Heart left ventricle (tissue), 16 donors: ENCODE measurements at regions of chr1 and their contacts with region 1.

Region 1: GRCh38 chr1:91529856-91530255 is 29.2 kb downstream of the CDC7 start:
- DNase-seq: no peak
- ATAC-seq: peak in 2 of 4 donors; percentile 61 to 67
- H3K4me3 ChIP-seq: no peak overlapping the region
- H3K27ac ChIP-seq: no peak overlapping the region
- H3K4me1 ChIP-seq: peaks cover 0 to 9% (median 0%) of the 10 kb centered on the region in 12 donors
- H3K27me3 ChIP-seq: no peaks in the 10 kb centered on the region
- CTCF ChIP-seq: peak in 7 of 12 donors; percentile 21 to 58 (median 32)
- POLR2A ChIP-seq: no peak

Region 2: DNA sequence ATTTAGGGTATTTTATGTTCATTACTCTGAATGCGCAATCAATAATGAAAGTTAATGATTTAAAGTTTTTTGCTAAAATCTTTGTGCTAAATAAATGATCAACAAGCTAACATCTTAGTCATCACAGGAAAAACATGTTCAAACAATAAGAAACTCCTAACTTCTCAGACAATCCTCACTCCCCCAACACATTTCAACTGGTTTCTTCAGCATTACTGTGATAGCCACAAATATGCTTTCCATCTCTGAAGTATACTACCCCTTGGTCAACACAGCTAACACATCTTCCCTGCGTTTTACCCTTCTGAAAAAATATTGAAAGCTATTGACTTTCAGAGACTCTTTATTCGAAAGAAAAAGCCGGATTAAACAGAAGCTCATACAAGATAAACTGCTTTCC is 593.8 kb before region 1 on chr1:
- intact Hi-C with region 1: no loop called
- DNase-seq: no peak
- ATAC-seq: no peak
- H3K4me3 ChIP-seq: no peak overlapping the region
- H3K27ac ChIP-seq: no peak overlapping the region
- H3K4me1 ChIP-seq: peaks cover 0 to 20% (median 1%) of the 10 kb centered on the region in 12 donors
- H3K27me3 ChIP-seq: no peaks in the 10 kb centered on the region
- CTCF ChIP-seq: no peak
- POLR2A ChIP-seq: no peak

Region 3: GRCh38 chr1:91490501-91490900 is 39.4 kb before region 1 on chr1:
- intact Hi-C with region 1: no loop called
- DNase-seq: no peak
- ATAC-seq: no peak
- H3K4me3 ChIP-seq: no peak overlapping the region
- H3K27ac ChIP-seq: no peak overlapping the region
- H3K4me1 ChIP-seq: no peaks in the 10 kb centered on the region
- H3K27me3 ChIP-seq: peaks cover 0 to 4% (median 0%) of the 10 kb centered on the region in 9 donors
- CTCF ChIP-seq: no peak
- POLR2A ChIP-seq: no peak

Region 4: DNA sequence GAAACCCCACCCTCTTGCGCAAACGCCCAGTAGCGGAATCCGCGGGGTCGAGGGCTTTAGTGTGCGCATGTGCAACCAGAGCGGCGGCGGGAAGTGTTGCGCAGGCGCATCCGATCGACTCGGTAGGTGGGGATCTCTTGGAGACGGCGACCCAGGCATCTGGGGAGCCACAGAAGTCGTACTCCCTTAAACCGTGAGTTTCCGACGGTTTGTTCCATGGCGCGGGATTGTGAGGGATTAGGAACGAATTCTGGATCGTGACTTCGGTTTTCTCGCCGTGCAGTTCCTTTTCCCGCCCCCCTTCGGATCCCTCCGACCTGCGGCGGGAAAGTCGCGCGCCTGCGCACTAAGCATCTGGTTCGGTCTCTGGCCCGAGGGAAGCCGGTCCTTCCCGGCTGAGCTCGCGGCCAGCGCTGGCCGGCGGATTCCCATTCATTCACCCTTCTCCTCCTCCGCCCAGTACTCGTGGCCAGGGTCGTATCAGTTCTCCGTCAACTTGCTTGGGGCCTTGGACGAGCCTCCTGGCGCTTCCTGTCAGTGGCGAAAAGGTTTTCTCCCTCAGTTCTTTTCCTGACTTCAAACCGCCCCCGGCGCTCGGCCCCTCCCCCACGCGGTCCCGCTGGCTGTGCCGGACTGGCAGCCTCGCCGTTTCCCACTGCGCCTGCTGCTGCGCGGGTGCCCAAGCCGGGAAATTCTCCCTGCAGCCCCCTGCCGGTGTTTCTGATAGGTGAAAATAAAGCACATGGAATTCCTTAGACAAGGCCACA is 28.9 kb before region 1 on chr1 and contains the start of gene CDC7:
- intact Hi-C with region 1: no loop called
- DNase-seq: peak; percentile 91 to 95 (median 93)
- ATAC-seq: peak; percentile 96 to 97 (median 96)
- H3K4me3 ChIP-seq: peak within 1 kb of the TSS; percentile 45 to 79 (median 64)
- H3K27ac ChIP-seq: peak within 1 kb of the TSS; percentile 54 to 92 (median 84)
- H3K4me1 ChIP-seq: peaks cover 0 to 35% (median 13%) of the 10 kb centered on the region in 12 donors
- H3K27me3 ChIP-seq: no peaks in the 10 kb centered on the region
- CTCF ChIP-seq: peak; percentile 11 to 59 (median 41)
- POLR2A ChIP-seq: peak in 1 of 2 donors; percentile 27
- total RNA-seq, gene CDC7: 0.36 to 6.3 (median 0.97) TPM

Region 5: DNA sequence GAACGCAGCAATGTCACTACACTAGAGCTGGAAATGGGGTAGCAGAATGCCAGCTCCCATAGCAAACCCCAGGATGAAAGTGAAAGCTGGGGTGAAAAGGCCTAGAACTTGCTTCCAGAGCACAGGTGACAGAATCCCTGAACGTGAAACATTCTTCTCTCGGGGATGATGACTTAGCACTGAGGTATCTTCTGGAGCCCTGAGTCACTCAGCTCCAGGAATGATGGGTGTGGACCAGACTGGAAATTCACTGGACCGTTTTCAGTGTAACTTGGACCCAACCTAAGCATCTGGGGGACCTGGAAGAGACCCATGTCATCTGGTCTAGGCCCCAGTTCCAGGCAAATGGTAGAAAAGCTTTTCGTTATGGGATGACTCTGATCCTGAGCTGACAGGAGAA is 79.7 kb after region 1 on chr1:
- intact Hi-C with region 1: loop called in 1 of 10 experiments (anchors 10 kb)
- DNase-seq: no peak
- ATAC-seq: peak in 2 of 4 donors; percentile 23 to 39
- H3K4me3 ChIP-seq: no peak overlapping the region
- H3K27ac ChIP-seq: peak overlapping the region in 1 of 12 donors; percentile 30
- H3K4me1 ChIP-seq: peaks cover 0 to 14% (median 0%) of the 10 kb centered on the region in 12 donors
- H3K27me3 ChIP-seq: no peaks in the 10 kb centered on the region
- CTCF ChIP-seq: no peak
- POLR2A ChIP-seq: no peak

Region 6: DNA sequence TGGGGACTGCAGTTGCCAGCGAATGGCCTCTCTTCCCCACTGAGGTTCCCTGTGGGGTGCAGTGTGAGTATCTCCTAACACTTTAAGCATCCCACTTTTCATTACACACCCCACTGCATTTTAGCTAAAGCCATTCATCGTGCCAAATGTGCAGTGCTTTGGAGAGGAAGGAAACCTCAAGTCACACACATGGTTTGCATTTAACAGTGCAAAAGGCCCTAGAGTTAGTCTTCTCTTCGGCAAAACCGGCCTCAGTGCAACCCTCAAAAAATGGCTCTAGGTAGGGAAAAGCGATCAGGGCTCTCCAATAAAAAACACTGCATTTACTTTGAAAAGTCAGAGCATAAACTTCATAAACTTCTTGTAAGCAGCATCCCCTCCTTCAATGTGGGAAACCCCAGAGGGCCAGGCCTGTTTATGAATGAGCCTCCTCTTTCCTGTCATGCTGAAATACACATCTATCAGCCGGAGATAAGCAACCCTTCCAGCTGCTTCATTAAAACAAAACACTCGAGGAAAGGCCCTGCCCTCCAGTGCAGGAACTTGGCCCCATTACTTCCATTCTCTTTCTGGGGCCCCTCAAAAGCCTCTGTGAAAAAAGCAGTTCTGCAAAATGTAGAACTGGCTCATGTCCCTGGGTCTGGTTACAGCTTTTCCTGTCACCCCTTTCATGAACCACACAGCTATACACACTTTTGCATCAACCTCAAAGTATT is 154.8 kb after region 1 on chr1:
- intact Hi-C with region 1: loop called in 1 of 10 experiments (anchors 10 kb)
- DNase-seq: peak in 1 of 5 donors; percentile 29
- ATAC-seq: peak in 3 of 4 donors; percentile 40 to 54 (median 45)
- H3K4me3 ChIP-seq: no peak overlapping the region
- H3K27ac ChIP-seq: peak overlapping the region in 6 of 12 donors; percentile 7 to 54 (median 42)
- H3K4me1 ChIP-seq: peaks cover 0 to 52% (median 37%) of the 10 kb centered on the region in 12 donors
- H3K27me3 ChIP-seq: no peaks in the 10 kb centered on the region
- CTCF ChIP-seq: no peak
- POLR2A ChIP-seq: no peak

Region 7: GRCh38 chr1:91929250-91929649 is 399.4 kb after region 1 on chr1:
- intact Hi-C with region 1: loop called in 1 of 10 experiments (anchors 5 kb)
- DNase-seq: no peak
- ATAC-seq: peak in 2 of 4 donors; percentile 30 to 58
- H3K4me3 ChIP-seq: no peak overlapping the region
- H3K27ac ChIP-seq: no peak overlapping the region
- H3K4me1 ChIP-seq: peaks cover 0 to 7% (median 0%) of the 10 kb centered on the region in 12 donors
- H3K27me3 ChIP-seq: no peaks in the 10 kb centered on the region
- CTCF ChIP-seq: no peak
- POLR2A ChIP-seq: no peak

Region 8: GRCh38 chr1:92026806-92027205 is 496.9 kb after region 1 on chr1:
- intact Hi-C with region 1: no loop called
- DNase-seq: no peak
- ATAC-seq: no peak
- H3K4me3 ChIP-seq: no peak overlapping the region
- H3K27ac ChIP-seq: no peak overlapping the region
- H3K4me1 ChIP-seq: peaks cover 0 to 9% (median 0%) of the 10 kb centered on the region in 12 donors
- H3K27me3 ChIP-seq: peaks cover 0 to 23% (median 0%) of the 10 kb centered on the region in 9 donors
- CTCF ChIP-seq: no peak
- POLR2A ChIP-seq: no peak